ENCODE measurements at regions of chr3 and their contacts with region 1.

Region 1: GRCh38 chr3:50430950-50431435 is 71.7 kb upstream of the TMEM115 start:
- DNase-seq: no peak
- ATAC-seq: peak in 1 of 4 donors; percentile 38
- H3K4me3 ChIP-seq: no peak overlapping the region
- H3K27ac ChIP-seq: peak overlapping the region in 1 of 12 donors; percentile 52
- H3K4me1 ChIP-seq: peaks cover 0 to 10% (median 0%) of the 10 kb centered on the region in 12 donors
- H3K27me3 ChIP-seq: no peaks in the 10 kb centered on the region
- CTCF ChIP-seq: no peak
- POLR2A ChIP-seq: no peak

Region 2: GRCh38 chr3:50350527-50351322 is 80.3 kb before region 1 on chr3 and contains the starts of genes CYB561D2 and NPRL2:
- intact Hi-C with region 1: loop called in 1 of 10 experiments (anchors 5 kb)
- DNase-seq: peak; percentile 96 to 99 (median 98)
- ATAC-seq: peak; percentile 88 to 97 (median 96)
- H3K4me3 ChIP-seq: peak within 1 kb of the TSS; percentile 24 to 95 (median 84)
- H3K27ac ChIP-seq: peak within 1 kb of the TSS; percentile 91 to 98 (median 95)
- H3K4me1 ChIP-seq: peaks cover 7 to 63% (median 40%) of the 10 kb centered on the region in 12 donors
- H3K27me3 ChIP-seq: no peaks in the 10 kb centered on the region
- CTCF ChIP-seq: peak in 2 of 12 donors; percentile 5 to 8
- POLR2A ChIP-seq: peak; percentile 58 to 86
- total RNA-seq, gene CYB561D2: 4.9 to 16.5 (median 7.8) TPM
- total RNA-seq, gene NPRL2: 12.0 to 18.4 (median 15.3) TPM